Endothelial cell of umbilical vein (primary cell): ENCODE measurements at regions of chr9 and their contacts with region 1.

Region 1: DNA sequence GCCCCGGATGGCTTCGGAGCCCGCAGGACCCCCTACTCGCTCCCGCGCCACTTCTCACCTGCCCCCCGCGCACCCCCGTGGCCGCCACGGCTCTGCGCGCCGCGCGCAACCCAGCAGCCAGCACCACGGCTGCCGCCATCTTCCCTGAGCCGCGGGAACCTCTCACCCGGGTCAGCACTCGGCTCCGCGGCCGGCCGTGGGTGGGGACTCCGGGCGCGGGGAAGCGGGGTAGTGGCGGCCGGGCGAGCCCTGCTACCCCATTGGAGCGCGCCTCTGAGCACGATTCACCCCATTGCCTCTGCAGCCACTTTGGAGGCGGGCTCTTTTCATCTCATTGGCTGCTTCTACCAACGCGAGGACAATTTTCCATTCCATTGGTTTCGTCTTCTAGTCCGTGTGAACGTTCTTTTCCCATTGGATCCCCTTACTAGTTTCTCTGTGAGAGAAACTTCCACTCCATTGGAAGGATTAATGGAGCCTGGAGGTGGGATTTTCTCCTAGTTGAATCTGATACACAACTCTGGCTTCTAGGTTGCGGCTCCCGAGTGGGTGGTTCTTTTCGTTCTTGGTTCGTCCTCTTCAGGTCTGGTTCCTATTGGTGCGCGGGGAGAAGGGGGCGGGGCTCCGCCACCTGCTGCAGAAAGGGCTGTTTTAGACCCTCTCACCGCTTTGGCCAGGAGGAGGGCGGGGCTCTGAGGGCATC is at the start of gene HINT2:
- DNase-seq: peak; percentile 99
- H3K4me3 ChIP-seq: peak within 1 kb of the TSS; percentile 83 to 89 (median 85)
- H3K27ac ChIP-seq: peak within 1 kb of the TSS; percentile 44
- H3K4me1 ChIP-seq: peaks cover 21% of the 10 kb centered on the region
- H3K27me3 ChIP-seq: no peaks in the 10 kb centered on the region
- CTCF ChIP-seq: no peak
- POLR2A ChIP-seq: peak; percentile 93
- total RNA-seq, gene HINT2: 27.2 and 37.4 TPM in 2 replicates

Region 2: DNA sequence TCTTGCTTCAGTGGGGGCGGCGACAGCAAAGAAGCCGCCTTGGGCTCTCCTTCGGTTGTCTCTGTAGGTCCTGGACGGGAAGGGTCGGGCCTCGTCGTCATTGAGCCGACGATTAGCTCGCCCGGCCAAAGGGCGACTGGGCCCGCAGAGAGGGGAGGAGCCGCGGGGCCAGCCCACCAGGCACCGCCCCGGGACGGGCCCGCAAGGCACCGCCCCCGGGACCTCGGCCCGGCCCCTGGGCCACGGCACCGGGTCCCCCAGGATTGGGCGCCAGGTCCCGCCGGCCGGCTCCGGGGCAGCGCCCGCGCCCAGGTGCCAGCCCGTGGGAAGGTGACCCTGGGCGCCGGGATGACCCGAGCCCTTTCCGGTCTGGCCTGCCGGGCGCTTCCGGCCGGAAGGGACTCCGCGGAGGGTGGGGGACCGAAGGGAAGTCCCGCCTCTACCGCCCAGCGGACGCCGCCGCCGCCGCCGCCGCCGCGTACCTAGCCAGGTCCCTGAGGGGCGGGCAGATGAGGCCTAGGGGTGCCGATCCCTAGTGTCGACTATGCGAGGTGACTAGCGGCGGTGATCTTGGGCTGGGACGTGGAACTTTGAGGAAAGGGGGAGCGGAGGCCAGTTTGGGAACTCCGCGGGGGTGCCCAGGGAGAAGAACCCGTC is 66.0 kb before region 1 on chr9 and contains the starts of genes GBA2 and RGP1:
- CTCF ChIA-PET with region 1: interaction called, 10 read pairs
- POLR2A ChIA-PET with region 1: no interaction called
- dilution Hi-C with region 1: no loop called
- intact Hi-C with region 1: no loop called
- DNase-seq: peak; percentile 75
- H3K4me3 ChIP-seq: peak within 1 kb of the TSS; percentile 66 to 99 (median 87)
- H3K27ac ChIP-seq: peak within 1 kb of the TSS; percentile 84
- H3K4me1 ChIP-seq: peaks cover 69% of the 10 kb centered on the region
- H3K27me3 ChIP-seq: no peaks in the 10 kb centered on the region
- CTCF ChIP-seq: no peak
- POLR2A ChIP-seq: peak; percentile 72
- total RNA-seq, gene GBA2: 158 and 196 TPM in 2 replicates
- total RNA-seq, gene RGP1: 23.3 and 29.0 TPM in 2 replicates

Region 3: DNA sequence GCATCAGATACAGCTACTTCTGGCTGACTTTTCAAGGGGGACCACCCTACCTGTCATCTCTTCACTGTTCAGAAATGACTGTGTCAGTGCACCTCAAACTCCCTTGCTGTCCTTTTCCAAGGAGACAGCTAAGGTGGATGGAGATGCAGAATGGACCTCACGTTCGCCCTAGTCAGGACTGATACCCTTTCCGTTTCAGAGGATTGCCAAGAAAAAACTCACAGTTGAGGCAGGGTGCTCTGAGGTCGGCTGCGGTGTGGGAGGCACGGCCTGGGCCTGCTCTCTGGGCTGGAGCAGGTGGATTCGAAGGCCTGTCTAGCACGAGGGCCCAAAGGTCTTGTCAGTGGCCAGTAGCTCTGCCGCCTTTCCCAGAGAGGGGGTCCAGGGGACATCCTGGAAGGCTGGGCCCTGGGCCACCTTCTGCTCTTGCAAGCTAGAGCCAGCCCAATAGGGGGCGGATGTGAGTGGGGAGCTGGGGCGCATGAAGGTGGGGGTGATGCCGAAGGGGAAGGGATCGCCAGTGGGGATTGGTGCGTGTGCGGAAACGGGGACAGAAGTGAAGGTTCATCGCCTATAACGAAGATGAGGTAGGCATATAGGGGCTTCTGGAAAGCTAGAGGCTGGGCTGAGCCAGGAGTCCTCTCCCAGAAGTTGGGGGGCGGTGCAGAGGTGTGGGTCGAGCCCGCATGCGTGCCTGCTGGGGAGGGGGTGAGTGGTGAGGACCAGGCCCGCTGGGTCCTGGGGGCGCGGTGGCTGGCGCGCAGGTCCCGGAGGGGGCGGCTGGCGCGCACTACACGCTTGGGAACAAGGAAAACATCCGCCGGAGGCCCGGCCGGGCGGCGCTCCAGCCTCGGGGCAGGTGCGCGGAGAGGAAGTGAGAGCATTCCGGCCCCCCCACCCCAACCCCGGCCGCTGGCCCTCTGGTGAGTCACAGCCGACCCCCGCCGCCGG is 58.4 kb before region 1 on chr9:
- CTCF ChIA-PET with region 1: interaction called, 4 read pairs
- POLR2A ChIA-PET with region 1: no interaction called
- dilution Hi-C with region 1: no loop called
- intact Hi-C with region 1: loop called (anchors 2 kb)
- DNase-seq: peak; percentile 84
- H3K4me3 ChIP-seq: peak overlapping the region in 2 of 3 experiments; percentile 8 to 15
- H3K27ac ChIP-seq: peak overlapping the region; percentile 97
- H3K4me1 ChIP-seq: peaks cover 92% of the 10 kb centered on the region
- H3K27me3 ChIP-seq: no peaks in the 10 kb centered on the region
- CTCF ChIP-seq: peak; percentile 45 to 68
- POLR2A ChIP-seq: no peak

Region 4: GRCh38 chr9:35798658-35799374 is 16.2 kb before region 1 on chr9:
- CTCF ChIA-PET with region 1: interaction called, 5 read pairs
- POLR2A ChIA-PET with region 1: no interaction called
- dilution Hi-C with region 1: no loop called
- intact Hi-C with region 1: loop called (anchors 2 kb)
- DNase-seq: peak; percentile 78
- H3K4me3 ChIP-seq: no peak overlapping the region
- H3K27ac ChIP-seq: peak overlapping the region; percentile 43
- H3K4me1 ChIP-seq: peaks cover 30% of the 10 kb centered on the region
- H3K27me3 ChIP-seq: no peaks in the 10 kb centered on the region
- CTCF ChIP-seq: no peak
- POLR2A ChIP-seq: no peak

Region 5: GRCh38 chr9:35844716-35845270 is 29.8 kb after region 1 on chr9:
- CTCF ChIA-PET with region 1: interaction called, 3 read pairs
- POLR2A ChIA-PET with region 1: no interaction called
- dilution Hi-C with region 1: no loop called
- intact Hi-C with region 1: loop called (anchors 1 kb)
- DNase-seq: peak; percentile 83
- H3K4me3 ChIP-seq: no peak overlapping the region
- H3K27ac ChIP-seq: no peak overlapping the region
- H3K4me1 ChIP-seq: peaks cover 16% of the 10 kb centered on the region
- H3K27me3 ChIP-seq: peaks cover 0 to 11% of the 10 kb centered on the region in 2 experiments
- CTCF ChIP-seq: no peak
- POLR2A ChIP-seq: no peak